Activated T-helper 2 cell treated with anti-CD3 and anti-CD28 coated beads, Interferon-gamma antibody, Interleukin-2, Interleukin-4, amounts not matched to agents 10 μg/mL and 5 μg/mL and 100 μg/mL, durations not matched to agents 14 hours and 24 hours and 36 hours (primary cell): ENCODE measurements at regions of chr1 and their contacts with region 1.

Region 1: GRCh38 chr1:193121616-193122593 is at the start of gene CDC73:
- DNase-seq: peak; percentile 97
- H3K4me3 Mint-ChIP-seq: peak within 1 kb of the TSS; percentile 99
- H3K27ac Mint-ChIP-seq: peak within 1 kb of the TSS; percentile 93
- H3K4me1 Mint-ChIP-seq: peaks cover 49% of the 10 kb centered on the region
- H3K27me3 Mint-ChIP-seq: peaks cover 8% of the 10 kb centered on the region
- total RNA-seq, gene CDC73: 47.0 and 53.3 TPM in 2 replicates

Region 2: GRCh38 chr1:193104906-193105820 is 16.7 kb before region 1 on chr1 and contains the start of gene GLRX2:
- intact Hi-C with region 1: loop called (anchors 1 kb)
- DNase-seq: peak; percentile 38
- H3K4me3 Mint-ChIP-seq: peak within 1 kb of the TSS; percentile 88
- H3K27ac Mint-ChIP-seq: peak within 1 kb of the TSS; percentile 71
- H3K4me1 Mint-ChIP-seq: peaks cover 17% of the 10 kb centered on the region
- H3K27me3 Mint-ChIP-seq: peaks cover 5% of the 10 kb centered on the region
- total RNA-seq, gene GLRX2: 29.0 and 31.6 TPM in 2 replicates

Region 3: GRCh38 chr1:193143285-193143684 is 21.4 kb after region 1 on chr1:
- intact Hi-C with region 1: loop called (anchors 2 kb)
- DNase-seq: no peak
- H3K4me3 Mint-ChIP-seq: no peak overlapping the region
- H3K27ac Mint-ChIP-seq: no peak overlapping the region
- H3K4me1 Mint-ChIP-seq: peaks cover 19% of the 10 kb centered on the region
- H3K27me3 Mint-ChIP-seq: no peaks in the 10 kb centered on the region

Region 4: GRCh38 chr1:193293726-193294125 is 171.8 kb after region 1 on chr1:
- intact Hi-C with region 1: no loop called
- DNase-seq: no peak
- H3K4me3 Mint-ChIP-seq: no peak overlapping the region
- H3K27ac Mint-ChIP-seq: no peak overlapping the region
- H3K4me1 Mint-ChIP-seq: no peaks in the 10 kb centered on the region
- H3K27me3 Mint-ChIP-seq: peaks cover 2% of the 10 kb centered on the region